ENCODE measurements at regions of chr3 and their contacts with region 1.

Region 1: GRCh38 chr3:29065211-29065785 is 215.6 kb upstream of the RBMS3 start:
- DNase-seq: peak; percentile 98
- H3K4me3 Mint-ChIP-seq: peak overlapping the region; percentile 49
- H3K27ac Mint-ChIP-seq: peak overlapping the region; percentile 94
- H3K4me1 Mint-ChIP-seq: peaks cover 25% of the 10 kb centered on the region
- H3K27me3 Mint-ChIP-seq: no peaks in the 10 kb centered on the region
- CTCF ChIP-seq: no peak

Region 2: DNA sequence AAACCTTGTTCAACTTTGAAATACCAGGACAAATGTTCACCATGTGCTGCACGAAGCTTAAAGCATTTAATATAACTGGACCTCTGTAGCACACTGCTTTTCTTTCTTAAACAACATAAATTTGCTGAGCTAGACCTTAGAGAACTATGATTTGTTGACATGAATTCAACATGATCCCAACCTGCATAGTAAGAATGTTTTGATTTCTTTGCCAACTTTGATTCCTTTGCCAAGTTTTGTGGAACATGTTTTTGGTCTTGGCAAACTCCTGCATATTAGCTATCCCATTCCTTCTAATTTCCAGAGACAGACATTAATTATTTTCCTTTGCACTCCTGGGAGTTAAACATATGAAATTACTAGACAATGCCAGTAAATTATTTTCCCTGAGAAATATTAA is 18.4 kb after region 1 on chr3:
- CTCF ChIA-PET with region 1: interaction called, 3 read pairs
- POLR2A ChIA-PET with region 1: interaction called, 28 read pairs
- intact Hi-C with region 1: no loop called
- DNase-seq: peak; percentile 16
- H3K4me3 Mint-ChIP-seq: no peak overlapping the region
- H3K27ac Mint-ChIP-seq: peak overlapping the region; percentile 57
- H3K4me1 Mint-ChIP-seq: peaks cover 15% of the 10 kb centered on the region
- H3K27me3 Mint-ChIP-seq: no peaks in the 10 kb centered on the region
- CTCF ChIP-seq: no peak

Region 3: GRCh38 chr3:29245441-29245840 is 180.1 kb after region 1 on chr3:
- CTCF ChIA-PET with region 1: no interaction called
- POLR2A ChIA-PET with region 1: interaction called, 10 read pairs
- intact Hi-C with region 1: no loop called
- DNase-seq: peak; percentile 71
- H3K4me3 Mint-ChIP-seq: no peak overlapping the region
- H3K27ac Mint-ChIP-seq: peak overlapping the region; percentile 33
- H3K4me1 Mint-ChIP-seq: peaks cover 18% of the 10 kb centered on the region
- H3K27me3 Mint-ChIP-seq: no peaks in the 10 kb centered on the region
- CTCF ChIP-seq: no peak